Activated CD4-positive, alpha-beta memory T cell treated with anti-CD3 and anti-CD28 coated beads for 36 hours (primary cell): ENCODE measurements at regions of chr22 and their contacts with region 1.

Region 1: DNA sequence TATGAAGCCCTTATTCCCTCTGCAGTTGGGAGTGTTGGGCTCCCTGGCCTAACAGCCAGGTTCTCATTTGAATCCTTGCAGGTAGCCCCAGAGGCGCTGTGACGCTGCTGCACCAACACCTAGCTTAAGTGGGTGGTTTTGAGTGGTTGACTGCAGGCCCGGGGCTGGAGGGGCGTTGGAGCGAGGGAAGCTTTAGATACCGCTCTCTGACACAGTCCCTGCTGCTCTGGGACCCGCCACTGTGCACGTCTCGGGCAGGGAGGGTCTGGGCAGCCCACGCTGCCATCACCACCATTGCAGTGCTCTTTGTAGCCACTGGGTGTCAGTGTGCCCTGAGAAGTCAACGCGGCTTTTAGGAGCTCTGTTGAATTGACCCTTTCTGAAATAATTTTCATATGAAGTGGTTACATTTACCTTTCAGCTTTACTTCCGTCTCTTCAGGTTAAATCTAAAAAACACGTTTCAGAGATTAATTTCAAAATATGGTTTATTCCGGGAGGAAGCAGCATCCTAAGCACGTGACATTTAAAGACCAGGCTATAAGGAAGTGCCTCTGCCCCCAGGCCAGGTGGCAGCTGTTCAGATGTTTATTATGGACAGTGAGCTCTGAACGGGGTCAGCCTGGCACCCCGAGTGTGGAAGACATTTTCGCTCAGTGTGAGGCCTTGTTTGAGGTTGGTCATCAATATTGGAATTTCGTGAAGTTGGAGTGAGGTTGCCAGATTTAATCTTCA is 30.9 kb upstream of the PARVB start:
- DNase-seq: peak; percentile 70
- H3K4me3 Mint-ChIP-seq: no peak overlapping the region
- H3K27ac Mint-ChIP-seq: no peak overlapping the region
- H3K4me1 Mint-ChIP-seq: peaks cover 21% of the 10 kb centered on the region
- H3K27me3 Mint-ChIP-seq: no peaks in the 10 kb centered on the region

Region 2: GRCh38 chr22:44003405-44004103 is 10.4 kb after region 1 on chr22:
- CTCF ChIA-PET with region 1: interaction called, 17 read pairs
- POLR2A ChIA-PET with region 1: no interaction called
- intact Hi-C with region 1: no loop called
- DNase-seq: no peak
- H3K4me3 Mint-ChIP-seq: no peak overlapping the region
- H3K27ac Mint-ChIP-seq: no peak overlapping the region
- H3K4me1 Mint-ChIP-seq: no peaks in the 10 kb centered on the region
- H3K27me3 Mint-ChIP-seq: no peaks in the 10 kb centered on the region

Region 3: GRCh38 chr22:44080936-44081861 is 88.0 kb after region 1 on chr22:
- CTCF ChIA-PET with region 1: interaction called, 182 read pairs
- POLR2A ChIA-PET with region 1: no interaction called
- intact Hi-C with region 1: loop called (anchors 1 kb)
- DNase-seq: peak; percentile 77
- H3K4me3 Mint-ChIP-seq: no peak overlapping the region
- H3K27ac Mint-ChIP-seq: no peak overlapping the region
- H3K4me1 Mint-ChIP-seq: no peaks in the 10 kb centered on the region
- H3K27me3 Mint-ChIP-seq: no peaks in the 10 kb centered on the region

Region 4: DNA sequence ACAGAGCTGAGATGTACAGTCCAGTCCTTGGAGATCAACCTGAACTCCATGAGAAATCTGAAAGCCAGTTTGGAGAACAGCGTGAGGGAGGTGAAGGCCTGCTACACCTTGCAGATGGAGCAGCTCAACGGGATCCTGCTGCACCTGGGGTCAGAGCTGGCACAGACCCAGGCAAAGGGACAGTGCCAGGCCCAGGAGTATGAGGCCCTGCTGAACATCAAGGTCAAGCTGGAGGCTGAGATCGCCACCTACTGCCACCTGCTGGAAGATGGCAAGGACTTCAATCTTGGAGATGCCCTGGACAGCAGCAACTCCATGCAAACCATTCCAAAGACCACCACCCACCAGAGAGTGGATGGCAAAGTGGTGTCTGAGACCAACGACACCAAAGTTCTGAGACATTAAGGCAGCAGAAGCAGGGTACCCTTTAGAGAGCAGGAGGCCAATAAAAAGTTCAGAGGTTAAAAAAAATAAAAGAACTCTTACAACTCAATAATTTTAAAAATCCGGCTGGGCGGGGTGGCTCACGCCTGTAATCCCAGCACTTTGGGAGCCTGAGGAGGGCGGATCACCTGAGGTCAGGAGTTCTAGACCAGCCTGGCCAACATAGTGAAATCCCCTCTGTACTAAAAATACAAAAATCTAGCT is 574.8 kb after region 1 on chr22:
- CTCF ChIA-PET with region 1: interaction called, 30 read pairs
- POLR2A ChIA-PET with region 1: no interaction called
- intact Hi-C with region 1: no loop called
- DNase-seq: peak; percentile 64
- H3K4me3 Mint-ChIP-seq: no peak overlapping the region
- H3K27ac Mint-ChIP-seq: no peak overlapping the region
- H3K4me1 Mint-ChIP-seq: no peaks in the 10 kb centered on the region
- H3K27me3 Mint-ChIP-seq: peaks cover 5% of the 10 kb centered on the region